ENCODE measurements at regions of chr17 and their contacts with region 1.

Region 1: GRCh38 chr17:7656958-7657609 is 6.4 kb downstream of the ATP1B2 start:
- DNase-seq: peak; percentile 94
- ATAC-seq: peak; percentile 91
- H3K4me3 Mint-ChIP-seq: peak overlapping the region; percentile 53
- H3K27ac Mint-ChIP-seq: peak overlapping the region; percentile 97
- H3K4me1 Mint-ChIP-seq: peaks cover 47% of the 10 kb centered on the region
- H3K27me3 Mint-ChIP-seq: peaks cover 14% of the 10 kb centered on the region
- CTCF ChIP-seq: no peak

Region 2: DNA sequence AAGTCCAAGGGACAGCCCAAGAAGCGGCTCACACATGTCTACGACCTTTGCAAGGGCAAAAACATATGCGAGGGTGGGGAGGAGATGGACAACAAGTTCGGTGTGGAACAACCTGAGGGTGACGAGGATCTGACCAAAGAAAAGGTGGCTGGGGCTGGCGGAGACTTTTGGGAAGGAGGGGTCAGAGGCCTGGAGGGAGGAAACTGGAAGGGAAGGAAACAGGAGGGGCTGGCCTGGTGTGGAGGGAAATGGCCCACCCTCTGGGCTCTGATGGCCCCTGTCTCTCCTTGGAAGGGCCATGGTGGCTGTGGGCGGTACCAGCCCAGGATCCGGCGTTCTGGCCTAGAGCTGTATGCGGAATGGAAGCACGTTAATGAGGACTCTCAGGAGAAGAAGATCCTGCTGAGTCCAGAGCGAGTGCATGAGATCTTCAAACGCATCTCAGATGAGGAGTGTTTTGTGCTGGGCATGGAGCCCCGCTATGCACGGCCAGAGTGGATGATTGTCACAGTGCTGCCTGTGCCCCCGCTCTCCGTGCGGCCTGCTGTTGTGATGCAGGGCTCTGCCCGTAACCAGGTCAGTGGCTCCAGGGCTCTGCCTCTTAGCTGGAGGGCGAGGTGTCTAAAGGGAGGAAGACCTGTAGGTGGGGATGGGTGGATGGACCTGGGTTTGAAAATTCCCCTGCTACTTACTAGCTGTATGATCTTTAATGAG is 160.5 kb before region 1 on chr17:
- CTCF ChIA-PET with region 1: no interaction called
- POLR2A ChIA-PET with region 1: no interaction called
- DNase-seq: no peak
- ATAC-seq: no peak
- H3K4me3 Mint-ChIP-seq: no peak overlapping the region
- H3K27ac Mint-ChIP-seq: peak overlapping the region; percentile 41; the same call in 1 of the 2 replicates
- H3K4me1 Mint-ChIP-seq: peaks cover 3% of the 10 kb centered on the region
- H3K27me3 Mint-ChIP-seq: no peaks in the 10 kb centered on the region
- CTCF ChIP-seq: no peak

Region 3: DNA sequence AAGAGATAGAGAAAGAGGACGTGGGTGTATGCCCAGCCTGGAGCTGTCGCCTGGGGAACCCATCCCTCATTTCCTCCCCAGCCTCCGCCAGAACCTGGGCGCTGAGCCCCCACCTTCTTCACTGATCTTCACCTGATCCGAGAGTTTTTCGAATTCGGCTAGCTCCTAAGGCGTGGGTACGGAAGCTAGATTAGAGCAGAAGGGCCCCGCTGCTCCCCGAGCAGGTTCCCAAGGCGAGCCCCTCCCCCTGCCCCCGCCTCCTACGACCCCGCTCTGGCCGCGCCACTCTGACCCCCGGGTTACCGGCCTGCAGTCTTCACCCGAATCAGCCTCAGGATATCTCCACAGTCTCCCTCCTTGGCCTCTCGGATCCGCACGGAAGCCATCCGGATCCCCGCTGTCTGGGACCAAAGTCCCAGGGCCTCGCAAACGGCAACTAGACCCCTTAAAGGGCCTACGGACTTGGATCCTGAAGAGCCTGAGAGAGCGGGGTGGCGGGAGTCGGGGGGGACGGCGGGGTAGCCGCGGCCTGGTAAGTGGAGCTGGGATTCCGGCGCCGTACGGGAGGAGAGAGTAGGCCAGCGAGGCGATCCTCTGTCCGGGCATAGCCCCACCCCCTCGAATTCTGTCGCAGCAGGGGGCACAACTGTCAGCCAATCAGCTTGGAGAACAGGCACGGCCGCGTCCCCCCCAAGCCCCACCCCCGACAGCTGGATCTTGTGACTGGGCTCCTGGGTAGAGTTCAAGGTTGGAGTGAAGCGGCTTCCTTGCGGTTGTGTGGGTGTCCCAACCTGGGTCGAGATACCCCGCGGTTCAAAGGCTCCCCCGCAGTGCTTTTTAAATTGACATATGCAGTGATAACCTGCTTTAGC is 29.6 kb before region 1 on chr17 and contains the start of gene SAT2:
- CTCF ChIA-PET with region 1: interaction called, 88 read pairs
- POLR2A ChIA-PET with region 1: interaction called, 20 read pairs
- DNase-seq: peak; percentile 99
- ATAC-seq: peak; percentile 87
- H3K4me3 Mint-ChIP-seq: peak within 1 kb of the TSS; percentile 85
- H3K27ac Mint-ChIP-seq: peak within 1 kb of the TSS; percentile 85
- H3K4me1 Mint-ChIP-seq: peaks cover 9% of the 10 kb centered on the region
- H3K27me3 Mint-ChIP-seq: no peaks in the 10 kb centered on the region
- CTCF ChIP-seq: no peak
- total RNA-seq, gene SAT2: 68.3 to 75.8 TPM (median 73.1 TPM) in 3 replicates

Region 4: GRCh38 chr17:7640783-7641182 is 16.3 kb before region 1 on chr17:
- CTCF ChIA-PET with region 1: interaction called, 88 read pairs
- POLR2A ChIA-PET with region 1: interaction called, 6 read pairs
- DNase-seq: no peak
- ATAC-seq: no peak
- H3K4me3 Mint-ChIP-seq: no peak overlapping the region
- H3K27ac Mint-ChIP-seq: no peak overlapping the region
- H3K4me1 Mint-ChIP-seq: peaks cover 10% of the 10 kb centered on the region
- H3K27me3 Mint-ChIP-seq: peaks cover 11% of the 10 kb centered on the region
- CTCF ChIP-seq: no peak

Region 5: GRCh38 chr17:7673239-7673638 is 16.2 kb after region 1 on chr17:
- CTCF ChIA-PET with region 1: interaction called, 40 read pairs
- POLR2A ChIA-PET with region 1: interaction called, 5 read pairs
- DNase-seq: peak; percentile 78
- ATAC-seq: no peak
- H3K4me3 Mint-ChIP-seq: no peak overlapping the region
- H3K27ac Mint-ChIP-seq: no peak overlapping the region; the same call in 1 of the 2 replicates
- H3K4me1 Mint-ChIP-seq: peaks cover 31% of the 10 kb centered on the region
- H3K27me3 Mint-ChIP-seq: no peaks in the 10 kb centered on the region; the same call in 1 of the 2 replicates
- CTCF ChIP-seq: peak; percentile 58

Region 6: GRCh38 chr17:7716901-7717755 is 60.0 kb after region 1 on chr17 and contains the start of gene DNAH2:
- CTCF ChIA-PET with region 1: interaction called, 15 read pairs
- POLR2A ChIA-PET with region 1: interaction called, 4 read pairs
- DNase-seq: peak; percentile 96
- ATAC-seq: peak; percentile 88
- H3K4me3 Mint-ChIP-seq: peak within 1 kb of the TSS; percentile 83
- H3K27ac Mint-ChIP-seq: peak within 1 kb of the TSS; percentile 72; the same call in 1 of the 2 replicates
- H3K4me1 Mint-ChIP-seq: peaks cover 36% of the 10 kb centered on the region
- H3K27me3 Mint-ChIP-seq: peaks cover 47% of the 10 kb centered on the region
- CTCF ChIP-seq: no peak
- total RNA-seq, gene DNAH2: 0.17 to 0.34 TPM (median 0.27 TPM) in 3 replicates

Region 7: GRCh38 chr17:7740481-7741001 is 83.5 kb after region 1 on chr17:
- CTCF ChIA-PET with region 1: no interaction called
- POLR2A ChIA-PET with region 1: no interaction called
- DNase-seq: no peak
- ATAC-seq: no peak
- H3K4me3 Mint-ChIP-seq: no peak overlapping the region
- H3K27ac Mint-ChIP-seq: no peak overlapping the region
- H3K4me1 Mint-ChIP-seq: no peaks in the 10 kb centered on the region
- H3K27me3 Mint-ChIP-seq: peaks cover 28% of the 10 kb centered on the region
- CTCF ChIP-seq: no peak

Region 8: GRCh38 chr17:7786866-7787265 is 129.8 kb after region 1 on chr17:
- CTCF ChIA-PET with region 1: no interaction called
- POLR2A ChIA-PET with region 1: no interaction called
- DNase-seq: no peak
- ATAC-seq: no peak
- H3K4me3 Mint-ChIP-seq: no peak overlapping the region
- H3K27ac Mint-ChIP-seq: no peak overlapping the region
- H3K4me1 Mint-ChIP-seq: no peaks in the 10 kb centered on the region
- H3K27me3 Mint-ChIP-seq: no peaks in the 10 kb centered on the region; the same call in 1 of the 2 replicates
- CTCF ChIP-seq: no peak